PC-9 (cell line): ENCODE measurements at regions of chr11 and their contacts with region 1.

Region 1: GRCh38 chr11:95150946-95151684 is 61.5 kb downstream of the ENDOD1 start:
- DNase-seq: peak; percentile 93 to 94
- H3K4me3 ChIP-seq: peak overlapping the region; percentile 67
- H3K27ac ChIP-seq: peak overlapping the region; percentile 60
- H3K4me1 ChIP-seq: peaks cover 31% of the 10 kb centered on the region
- H3K27me3 ChIP-seq: no peaks in the 10 kb centered on the region
- CTCF ChIP-seq: no peak; the same call in 1 of the 2 replicates

Region 2: DNA sequence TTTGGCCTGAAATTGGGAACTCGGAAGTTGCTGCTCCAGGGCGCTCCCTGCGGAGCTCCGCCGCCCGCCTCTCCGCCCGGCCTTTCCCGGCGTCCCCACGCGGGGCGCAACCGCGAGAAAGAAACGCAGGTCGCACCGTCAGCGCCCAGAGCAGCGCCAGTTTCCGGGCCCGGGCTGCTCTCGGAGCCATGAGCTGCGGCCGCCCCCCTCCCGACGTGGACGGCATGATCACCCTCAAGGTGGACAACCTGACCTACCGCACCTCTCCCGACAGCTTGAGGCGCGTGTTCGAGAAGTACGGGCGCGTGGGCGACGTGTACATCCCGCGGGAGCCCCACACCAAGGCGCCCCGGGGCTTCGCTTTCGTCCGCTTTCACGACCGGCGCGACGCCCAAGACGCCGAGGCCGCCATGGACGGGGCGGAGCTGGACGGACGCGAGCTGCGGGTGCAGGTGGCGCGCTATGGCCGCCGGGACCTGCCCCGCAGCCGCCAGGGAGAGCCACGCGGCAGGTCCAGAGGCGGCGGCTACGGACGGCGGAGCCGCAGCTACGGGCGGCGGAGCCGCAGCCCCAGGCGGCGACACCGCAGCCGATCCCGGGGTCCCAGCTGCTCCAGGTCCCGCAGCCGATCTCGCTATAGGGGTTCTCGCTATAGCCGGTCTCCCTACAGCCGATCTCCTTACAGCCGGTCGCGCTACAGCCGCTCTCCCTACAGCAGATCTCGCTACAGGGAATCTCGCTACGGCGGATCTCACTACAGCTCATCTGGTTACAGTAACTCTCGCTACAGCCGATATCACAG is 83.9 kb before region 1 on chr11:
- CTCF ChIA-PET with region 1: interaction called, 9 read pairs
- POLR2A ChIA-PET with region 1: interaction called, 3 read pairs
- intact Hi-C with region 1: loop called (anchors 1 kb)
- DNase-seq: peak; percentile 68 to 72
- H3K4me3 ChIP-seq: peak overlapping the region; percentile 89
- H3K27ac ChIP-seq: peak overlapping the region; percentile 85
- H3K4me1 ChIP-seq: peaks cover 20% of the 10 kb centered on the region
- H3K27me3 ChIP-seq: no peaks in the 10 kb centered on the region
- CTCF ChIP-seq: peak; percentile 53

Region 3: DNA sequence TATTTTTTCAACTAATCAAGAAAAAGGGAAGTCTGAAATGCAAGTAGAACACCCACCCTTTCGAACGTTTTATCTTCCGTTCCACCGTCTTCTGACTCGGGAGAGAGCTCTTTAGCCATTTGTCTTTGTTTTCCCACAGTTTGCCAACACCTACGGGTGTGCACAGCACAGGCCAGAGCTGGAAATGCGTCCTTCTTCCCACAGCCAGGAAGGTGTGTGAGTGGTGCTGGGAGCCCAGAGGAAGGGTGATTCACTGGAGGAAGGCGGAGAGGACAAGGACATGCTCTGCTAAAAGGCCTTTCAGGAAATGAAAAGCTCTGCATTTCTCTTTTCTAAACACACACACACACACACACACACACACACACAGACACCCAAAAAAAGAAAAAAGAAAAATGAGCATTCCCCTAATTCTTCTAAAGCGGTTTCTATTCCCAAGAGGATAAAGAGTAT is 42.9 kb before region 1 on chr11:
- CTCF ChIA-PET with region 1: interaction called, 5 read pairs
- POLR2A ChIA-PET with region 1: no interaction called
- intact Hi-C with region 1: loop called (anchors 5 kb)
- DNase-seq: peak; percentile 62 to 91
- H3K4me3 ChIP-seq: peak overlapping the region; percentile 58
- H3K27ac ChIP-seq: peak overlapping the region; percentile 92
- H3K4me1 ChIP-seq: peaks cover 34% of the 10 kb centered on the region
- H3K27me3 ChIP-seq: no peaks in the 10 kb centered on the region
- CTCF ChIP-seq: 0 out of 2 replicates have a peak, but pooled peaks have one; percentile 9

Region 4: DNA sequence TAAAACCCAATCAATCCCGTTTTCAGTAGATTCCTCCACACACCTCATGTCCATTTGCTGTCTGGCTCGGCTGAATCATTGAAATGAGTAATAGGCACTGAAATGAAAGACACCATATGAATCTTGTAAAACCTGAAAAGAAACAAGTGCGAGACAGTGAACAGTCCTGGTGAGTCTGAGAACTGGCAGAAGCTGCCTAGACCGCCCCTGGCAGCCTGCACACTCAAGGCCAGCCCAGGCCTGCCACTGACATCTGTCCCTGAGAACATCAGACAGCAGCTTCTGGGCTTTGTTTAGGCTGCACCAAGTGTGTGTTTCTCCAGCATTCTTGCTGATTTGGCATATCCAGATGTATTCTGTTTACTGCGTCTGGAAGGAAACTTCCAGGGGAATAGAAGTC is 16.6 kb before region 1 on chr11:
- CTCF ChIA-PET with region 1: no interaction called
- POLR2A ChIA-PET with region 1: interaction called, 3 read pairs
- intact Hi-C with region 1: loop called (anchors 1 kb)
- DNase-seq: peak; percentile 73 to 94
- H3K4me3 ChIP-seq: no peak overlapping the region
- H3K27ac ChIP-seq: peak overlapping the region; percentile 43
- H3K4me1 ChIP-seq: peaks cover 25% of the 10 kb centered on the region
- H3K27me3 ChIP-seq: no peaks in the 10 kb centered on the region
- CTCF ChIP-seq: no peak

Region 5: GRCh38 chr11:95337175-95337957 is 186.3 kb after region 1 on chr11:
- CTCF ChIA-PET with region 1: no interaction called
- POLR2A ChIA-PET with region 1: no interaction called
- intact Hi-C with region 1: no loop called
- DNase-seq: no peak
- H3K4me3 ChIP-seq: no peak overlapping the region
- H3K27ac ChIP-seq: no peak overlapping the region
- H3K4me1 ChIP-seq: no peaks in the 10 kb centered on the region
- H3K27me3 ChIP-seq: no peaks in the 10 kb centered on the region
- CTCF ChIP-seq: no peak

Region 6: DNA sequence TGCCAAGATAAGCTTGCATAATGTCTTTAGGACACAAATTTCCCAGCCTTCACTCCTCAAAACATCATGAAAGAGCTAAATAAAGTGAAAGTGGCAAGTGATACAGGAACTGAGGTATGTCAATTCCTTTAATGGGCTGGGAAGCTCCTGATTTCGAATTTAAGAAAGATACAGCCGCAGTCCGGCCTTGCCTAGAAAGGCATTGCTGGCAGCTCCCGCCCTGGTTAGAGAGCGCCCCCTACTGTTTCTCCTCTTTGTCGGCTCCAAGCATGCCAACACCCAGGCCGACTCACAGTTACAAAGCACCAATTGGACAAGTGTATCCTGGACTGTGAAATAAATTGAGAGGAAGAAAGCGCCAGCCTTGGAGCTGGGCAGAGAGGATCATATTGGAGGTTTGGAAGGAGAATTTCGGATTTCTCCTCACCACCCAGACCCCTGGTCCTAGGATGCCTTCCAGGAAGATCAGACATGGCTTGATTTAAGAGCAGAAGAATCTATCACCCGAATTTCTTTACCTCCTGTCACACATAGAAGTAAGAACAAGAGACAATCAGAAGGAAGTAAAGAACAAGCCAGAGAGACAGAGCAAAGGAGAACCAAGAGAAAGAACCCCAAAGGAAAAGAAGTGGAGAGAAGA is 554.5 kb after region 1 on chr11:
- CTCF ChIA-PET with region 1: interaction called, 6 read pairs
- POLR2A ChIA-PET with region 1: no interaction called
- intact Hi-C with region 1: loop called (anchors 1 kb)
- DNase-seq: peak; percentile 49 to 50
- H3K4me3 ChIP-seq: no peak overlapping the region
- H3K27ac ChIP-seq: no peak overlapping the region
- H3K4me1 ChIP-seq: no peaks in the 10 kb centered on the region
- H3K27me3 ChIP-seq: peaks cover 27% of the 10 kb centered on the region
- CTCF ChIP-seq: peak; percentile 87

Region 7: GRCh38 chr11:96424693-96425092 is 1273.6 kb after region 1 on chr11:
- CTCF ChIA-PET with region 1: interaction called, 4 read pairs
- POLR2A ChIA-PET with region 1: no interaction called
- intact Hi-C with region 1: loop called (anchors 5 kb)
- DNase-seq: peak; percentile 5 to 75
- H3K4me3 ChIP-seq: no peak overlapping the region
- H3K27ac ChIP-seq: no peak overlapping the region
- H3K4me1 ChIP-seq: peaks cover 10% of the 10 kb centered on the region; the same call in 1 of the 2 replicates
- H3K27me3 ChIP-seq: no peaks in the 10 kb centered on the region
- CTCF ChIP-seq: no peak